ENCODE measurements at regions of chr2 and their contacts with region 1.

Region 1: DNA sequence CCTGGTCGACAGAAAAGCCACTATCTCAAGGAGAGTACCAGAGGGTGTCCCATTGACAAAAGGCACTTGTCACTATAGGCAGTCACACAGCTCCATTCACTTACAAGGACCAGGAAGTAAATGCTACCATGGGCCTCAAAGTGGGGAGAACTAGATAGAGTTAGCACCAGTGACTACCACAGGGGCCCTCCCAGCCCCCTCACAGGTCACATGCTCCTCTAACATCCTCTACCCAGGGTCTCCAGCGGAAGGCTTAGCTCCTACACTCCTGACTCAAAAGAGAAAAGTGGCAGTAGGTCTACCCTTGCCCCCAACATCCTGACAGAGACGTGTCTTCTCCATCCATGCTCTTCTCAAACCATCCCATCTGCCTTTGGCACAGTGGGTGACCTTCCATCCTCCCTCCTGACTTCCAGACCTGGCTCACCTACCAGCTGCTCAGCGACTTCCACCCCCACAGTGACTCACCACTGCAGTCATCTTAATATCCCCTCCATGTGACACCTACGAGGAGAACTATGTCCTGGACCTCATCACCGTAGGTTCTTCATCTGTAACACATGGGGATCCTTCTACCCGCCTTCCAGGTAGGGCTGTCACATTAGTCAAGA is 5.6 kb upstream of the DNMT3A start:
- DNase-seq: no peak

Region 2: DNA sequence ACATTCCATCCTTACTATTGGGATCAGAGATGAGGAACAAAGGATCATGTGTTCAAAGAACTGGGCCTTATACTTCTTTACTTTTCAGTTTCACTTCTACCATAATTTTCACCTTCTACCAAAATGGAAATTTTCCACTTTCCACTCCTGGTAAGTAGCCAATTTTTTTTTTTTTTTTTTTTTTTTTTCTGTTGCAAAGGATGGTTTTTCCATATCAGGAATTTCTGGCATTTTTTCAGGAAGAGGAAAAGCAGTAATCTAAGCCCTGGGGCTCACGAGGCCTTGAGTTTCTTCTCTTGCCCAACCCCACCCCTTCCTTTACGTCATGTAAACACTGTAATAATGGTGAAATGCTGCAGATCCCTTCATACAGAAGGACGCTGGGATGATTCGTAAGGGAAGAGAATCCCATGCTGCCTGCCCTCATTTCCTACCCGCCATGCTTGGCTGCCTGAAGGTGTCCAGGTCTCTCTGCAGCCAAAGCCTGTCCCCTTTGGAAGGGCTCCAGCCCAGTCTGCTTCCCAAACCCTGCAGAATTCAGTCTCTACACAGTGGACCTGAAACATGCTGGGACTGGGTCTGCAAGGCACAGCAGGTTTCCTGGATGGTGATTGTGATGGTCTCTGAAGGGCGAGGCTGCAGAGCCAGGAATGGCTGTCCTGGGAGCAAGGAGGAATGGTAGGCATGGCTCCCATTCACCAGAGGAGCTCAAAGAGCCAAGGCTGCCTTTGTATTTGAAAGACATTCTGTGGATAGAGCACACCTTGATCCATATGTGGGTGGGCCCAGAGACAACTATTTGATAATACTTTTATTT is 248.4 kb before region 1 on chr2:
- intact Hi-C with region 1: loop called in 1 of 2 experiments (anchors 5 kb)
- DNase-seq: no peak

Region 3: GRCh38 chr2:26382564-26382963 is 1035.3 kb after region 1 on chr2:
- intact Hi-C with region 1: no loop called
- DNase-seq: no peak